PC-3 (cell line): ENCODE measurements at regions of chr15 and their contacts with region 1.

Region 1: GRCh38 chr15:40746916-40747514 is 8.0 kb downstream of the RMDN3 start:
- DNase-seq: no peak
- ATAC-seq: no peak
- H3K4me3 ChIP-seq: no peak overlapping the region
- H3K27ac ChIP-seq: no peak overlapping the region
- H3K4me1 ChIP-seq: peaks cover 5% of the 10 kb centered on the region
- H3K27me3 ChIP-seq: no peaks in the 10 kb centered on the region
- CTCF ChIP-seq: no peak

Region 2: DNA sequence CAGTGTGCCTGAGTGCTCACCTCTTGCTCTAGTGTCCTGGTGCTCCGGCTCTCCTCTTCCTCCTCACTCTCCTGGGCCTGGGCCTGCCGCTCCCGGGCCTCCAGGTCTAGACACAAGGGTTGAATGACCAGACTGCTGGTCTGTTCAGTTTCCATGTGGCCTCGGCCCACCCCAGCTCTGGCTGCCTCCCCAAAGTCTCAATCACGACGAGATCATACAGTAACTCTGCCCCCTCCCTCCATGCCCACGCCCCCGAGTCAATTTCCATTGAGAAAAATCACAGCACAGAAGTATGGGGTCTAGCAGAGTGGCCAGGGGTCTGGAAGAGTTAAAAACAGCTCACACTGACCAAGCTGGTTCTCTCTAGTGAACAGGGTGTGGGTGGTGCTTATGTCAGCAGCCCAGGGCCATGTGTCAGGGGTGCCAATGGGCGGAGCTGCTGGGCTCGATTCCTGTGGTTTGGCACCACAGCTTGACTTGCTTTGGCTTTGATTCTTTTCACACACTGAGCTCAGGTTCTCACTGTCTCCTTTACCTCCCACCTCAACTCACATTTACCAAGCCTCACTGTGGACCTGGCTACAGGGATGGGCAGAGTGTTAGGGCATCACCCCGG is 29.6 kb after region 1 on chr15:
- CTCF ChIA-PET with region 1: interaction called, 14 read pairs
- POLR2A ChIA-PET with region 1: no interaction called
- intact Hi-C with region 1: no loop called
- DNase-seq: peak; percentile 93
- ATAC-seq: peak; percentile 100
- H3K4me3 ChIP-seq: no peak overlapping the region
- H3K27ac ChIP-seq: peak overlapping the region; percentile 66
- H3K4me1 ChIP-seq: peaks cover 17% of the 10 kb centered on the region
- H3K27me3 ChIP-seq: no peaks in the 10 kb centered on the region
- CTCF ChIP-seq: no peak

Region 3: GRCh38 chr15:40782580-40783227 is 35.7 kb after region 1 on chr15:
- CTCF ChIA-PET with region 1: interaction called, 22 read pairs
- POLR2A ChIA-PET with region 1: interaction called, 5 read pairs
- intact Hi-C with region 1: loop called (anchors 1 kb)
- DNase-seq: peak; percentile 90
- ATAC-seq: peak; percentile 90
- H3K4me3 ChIP-seq: no peak overlapping the region
- H3K27ac ChIP-seq: no peak overlapping the region
- H3K4me1 ChIP-seq: peaks cover 28% of the 10 kb centered on the region
- H3K27me3 ChIP-seq: no peaks in the 10 kb centered on the region
- CTCF ChIP-seq: peak; percentile 93

Region 4: DNA sequence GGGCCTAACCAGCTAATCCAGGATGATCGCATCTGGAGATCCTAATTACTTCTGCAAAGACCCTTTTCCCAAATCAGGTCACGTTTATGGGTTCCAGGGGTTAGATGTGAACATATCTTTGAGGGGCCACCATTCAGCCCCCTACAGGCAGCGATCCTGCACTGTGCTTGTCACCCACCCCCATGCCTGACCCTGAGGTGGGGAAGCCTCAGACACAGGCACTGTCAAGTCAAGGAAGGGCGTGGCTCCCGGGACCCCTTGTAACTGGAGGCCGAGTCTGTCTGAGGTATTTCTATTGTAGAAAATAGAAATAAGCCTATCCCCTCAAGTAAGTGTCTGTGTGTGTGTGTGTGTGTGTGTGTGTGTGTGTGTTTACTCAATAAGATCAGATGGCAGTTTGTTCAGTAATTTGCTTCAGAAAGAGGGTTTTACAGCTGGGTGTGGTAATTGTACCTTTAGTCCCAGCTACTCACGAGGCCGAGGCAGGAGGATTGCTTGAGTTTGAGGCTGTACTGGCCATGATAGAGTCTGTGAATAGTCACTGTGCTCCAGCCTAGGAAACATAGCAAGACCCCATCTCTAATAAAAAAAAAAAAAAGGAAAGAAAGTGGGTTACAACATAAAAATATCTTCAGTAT is 105.4 kb after region 1 on chr15:
- CTCF ChIA-PET with region 1: interaction called, 10 read pairs
- POLR2A ChIA-PET with region 1: interaction called, 8 read pairs
- intact Hi-C with region 1: loop called (anchors 1 kb)
- DNase-seq: no peak
- ATAC-seq: peak; percentile 10; the same call in 1 of the 2 replicates
- H3K4me3 ChIP-seq: no peak overlapping the region
- H3K27ac ChIP-seq: no peak overlapping the region
- H3K4me1 ChIP-seq: peaks cover 25% of the 10 kb centered on the region
- H3K27me3 ChIP-seq: no peaks in the 10 kb centered on the region
- CTCF ChIP-seq: no peak